Activated CD4-positive, alpha-beta T cell treated with anti-CD3 and anti-CD28 coated beads, Interleukin-2, amount 10 ng/mL, durations not matched to agents 24 days and 14 days (primary cell): ENCODE measurements at regions of chr10 and their contacts with region 1.

Region 1: GRCh38 chr10:6163364-6164270 is 39.1 kb upstream of the PFKFB3 start:
- DNase-seq: peak; percentile 98
- H3K4me3 Mint-ChIP-seq: peak overlapping the region; percentile 98
- H3K27ac Mint-ChIP-seq: peak overlapping the region; percentile 98
- H3K4me1 Mint-ChIP-seq: peaks cover 49% of the 10 kb centered on the region
- H3K27me3 Mint-ChIP-seq: no peaks in the 10 kb centered on the region

Region 2: DNA sequence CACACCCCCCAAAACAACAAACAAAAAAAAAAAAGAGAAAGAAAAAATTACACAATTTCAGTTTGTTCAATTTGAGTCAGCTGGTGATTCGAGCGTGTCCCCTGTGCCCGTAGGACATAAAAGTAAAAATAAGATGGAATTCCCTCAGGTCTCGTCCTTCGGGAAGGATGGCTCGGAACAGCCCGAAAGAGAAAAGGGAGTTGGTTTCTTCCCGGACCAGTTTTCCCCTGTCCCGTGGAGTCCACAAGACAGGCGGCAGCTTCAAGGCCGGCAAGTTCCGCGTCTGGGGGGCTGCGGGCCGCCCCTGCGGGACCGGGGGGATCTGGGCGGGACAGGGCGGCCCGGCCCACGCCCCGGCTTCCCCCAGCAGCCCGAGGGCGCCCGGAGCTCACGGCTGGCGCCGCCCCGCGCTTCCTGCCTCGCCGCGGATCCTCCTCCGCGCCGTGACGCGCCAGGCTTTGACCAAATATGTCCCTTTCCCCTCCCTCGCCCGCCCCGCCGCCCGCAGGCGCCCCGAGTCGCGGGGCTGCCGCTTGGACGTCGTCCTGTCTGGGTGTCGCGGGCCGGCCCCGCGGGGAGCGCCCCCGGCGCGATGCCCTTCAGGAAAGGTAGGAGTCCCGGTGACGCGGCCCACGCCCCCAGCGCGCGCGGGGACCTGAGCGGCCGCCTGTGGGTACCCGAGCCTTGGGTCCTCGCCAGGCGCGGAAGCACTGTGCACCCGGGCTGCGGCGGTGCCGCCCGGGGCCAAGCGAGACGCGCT is 19.0 kb before region 1 on chr10:
- intact Hi-C with region 1: loop called (anchors 1 kb)
- DNase-seq: peak; percentile 98
- H3K4me3 Mint-ChIP-seq: peak overlapping the region; percentile 89
- H3K27ac Mint-ChIP-seq: peak overlapping the region; percentile 81
- H3K4me1 Mint-ChIP-seq: peaks cover 73% of the 10 kb centered on the region
- H3K27me3 Mint-ChIP-seq: no peaks in the 10 kb centered on the region